Vagina (tissue), 2 donors: ENCODE measurements at regions of chr1 and their contacts with region 1.

Region 1: GRCh38 chr1:156625436-156626078 is 6.3 kb downstream of the HAPLN2 start:
- DNase-seq: no peak
- H3K4me3 ChIP-seq: peak overlapping the region; percentile 40
- H3K27ac ChIP-seq: peak overlapping the region; percentile 53
- H3K4me1 ChIP-seq: peaks cover 19% of the 10 kb centered on the region
- H3K27me3 ChIP-seq: peaks cover 17% of the 10 kb centered on the region
- CTCF ChIP-seq: peak; percentile 71 to 76 (median 71)
- POLR2A ChIP-seq: no peak

Region 2: GRCh38 chr1:156160000-156160742 is 465.4 kb before region 1 on chr1:
- intact Hi-C with region 1: loop called (anchors 5 kb)
- DNase-seq: no peak
- H3K4me3 ChIP-seq: peak overlapping the region; percentile 52 to 58
- H3K27ac ChIP-seq: peak overlapping the region; percentile 89
- H3K4me1 ChIP-seq: peaks cover 18% of the 10 kb centered on the region
- H3K27me3 ChIP-seq: no peaks in the 10 kb centered on the region
- CTCF ChIP-seq: no peak
- POLR2A ChIP-seq: no peak

Region 3: DNA sequence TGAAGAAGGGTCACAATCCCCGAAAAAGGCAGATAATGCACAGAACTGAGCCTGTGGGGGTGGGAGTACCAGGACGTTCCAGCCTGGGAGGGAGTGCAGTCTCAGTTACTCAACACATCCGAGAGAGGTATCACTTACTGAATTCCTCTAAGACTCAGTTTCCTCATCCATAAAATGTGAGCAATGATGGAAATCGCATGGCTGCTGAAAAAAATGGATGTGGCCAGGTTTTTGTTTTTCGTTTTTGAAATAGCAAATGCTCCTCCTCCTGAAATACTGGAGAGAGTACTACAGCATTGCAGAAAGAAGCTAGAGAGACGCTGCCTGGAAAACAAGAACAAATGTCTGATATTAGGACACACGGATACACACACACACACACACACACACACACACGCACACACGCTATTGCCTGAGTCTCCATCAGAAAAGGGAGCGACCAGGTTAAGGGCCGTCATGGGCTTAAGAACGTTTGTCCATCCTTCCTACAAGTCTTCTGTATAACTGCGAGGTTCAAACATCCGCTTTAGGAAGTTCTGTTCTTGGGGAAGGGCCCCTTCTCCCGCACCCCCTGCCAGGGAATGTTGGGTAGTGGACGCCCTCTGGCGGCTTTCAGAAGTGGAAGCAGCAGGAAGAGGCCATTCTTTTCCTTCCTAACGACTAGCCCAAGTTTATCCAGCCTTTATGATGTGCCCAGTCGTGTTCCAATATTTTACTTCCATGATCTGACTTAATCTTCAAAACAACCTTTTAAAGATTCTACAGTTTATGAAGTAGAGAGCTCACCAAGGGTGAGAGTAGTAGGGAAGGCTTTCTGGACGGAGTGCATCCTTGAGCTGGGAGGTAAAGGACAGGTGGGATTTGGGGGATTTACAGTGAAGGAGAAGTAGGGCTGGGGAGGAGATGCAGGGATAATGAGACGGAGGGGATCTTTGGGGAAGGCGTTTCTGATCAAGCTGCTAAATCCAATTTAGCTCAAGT is 52.3 kb after region 1 on chr1:
- intact Hi-C with region 1: loop called (anchors 5 kb)
- DNase-seq: no peak
- H3K4me3 ChIP-seq: peak overlapping the region; percentile 48 to 82
- H3K27ac ChIP-seq: peak overlapping the region; percentile 91
- H3K4me1 ChIP-seq: peaks cover 37% of the 10 kb centered on the region
- H3K27me3 ChIP-seq: no peaks in the 10 kb centered on the region
- CTCF ChIP-seq: peak; percentile 77 to 96 (median 80)
- POLR2A ChIP-seq: no peak